ENCODE measurements at regions of chr9 and their contacts with region 1.

Region 1: GRCh38 chr9:35696525-35697215 is 6.9 kb upstream of the TPM2 start:
- DNase-seq: peak; percentile 70
- ATAC-seq: peak; percentile 93
- H3K4me3 Mint-ChIP-seq: no peak overlapping the region
- H3K27ac Mint-ChIP-seq: peak overlapping the region; percentile 52
- H3K4me1 Mint-ChIP-seq: peaks cover 9% of the 10 kb centered on the region
- H3K27me3 Mint-ChIP-seq: no peaks in the 10 kb centered on the region

Region 2: GRCh38 chr9:35518226-35518821 is 178.3 kb before region 1 on chr9:
- CTCF ChIA-PET with region 1: no interaction called
- POLR2A ChIA-PET with region 1: no interaction called
- DNase-seq: no peak
- ATAC-seq: no peak
- H3K4me3 Mint-ChIP-seq: no peak overlapping the region
- H3K27ac Mint-ChIP-seq: no peak overlapping the region
- H3K4me1 Mint-ChIP-seq: no peaks in the 10 kb centered on the region
- H3K27me3 Mint-ChIP-seq: no peaks in the 10 kb centered on the region

Region 3: DNA sequence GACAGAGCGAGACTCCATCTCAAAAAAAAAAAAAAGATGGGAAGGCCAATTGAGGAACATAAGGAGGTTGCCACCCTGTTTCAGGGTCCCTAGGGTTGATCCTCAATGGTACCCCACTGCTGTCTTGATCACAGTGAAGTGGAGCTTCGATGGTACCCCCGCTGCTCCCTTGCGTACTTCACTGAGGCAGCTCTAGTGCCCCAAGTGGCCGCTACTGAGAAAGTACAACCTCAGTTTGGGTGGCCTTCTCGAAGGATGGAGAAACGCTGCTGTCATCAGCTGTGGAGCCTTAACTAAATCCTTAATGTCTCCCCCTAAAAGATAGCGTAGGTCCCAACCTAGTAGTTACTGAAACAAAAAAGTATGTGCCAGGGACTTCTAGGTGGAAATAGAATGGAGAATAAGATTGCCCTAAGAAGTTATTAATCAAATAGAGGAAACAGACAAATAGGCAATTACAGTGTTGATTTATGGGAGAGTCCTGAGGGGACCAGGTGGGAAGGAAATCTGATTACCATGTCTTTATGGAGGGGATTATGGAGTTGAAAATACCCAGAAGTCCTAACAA is 85.4 kb before region 1 on chr9:
- CTCF ChIA-PET with region 1: interaction called, 52 read pairs
- POLR2A ChIA-PET with region 1: no interaction called
- DNase-seq: peak; percentile 73
- ATAC-seq: peak; percentile 87
- H3K4me3 Mint-ChIP-seq: no peak overlapping the region
- H3K27ac Mint-ChIP-seq: no peak overlapping the region
- H3K4me1 Mint-ChIP-seq: peaks cover 30% of the 10 kb centered on the region
- H3K27me3 Mint-ChIP-seq: no peaks in the 10 kb centered on the region

Region 4: DNA sequence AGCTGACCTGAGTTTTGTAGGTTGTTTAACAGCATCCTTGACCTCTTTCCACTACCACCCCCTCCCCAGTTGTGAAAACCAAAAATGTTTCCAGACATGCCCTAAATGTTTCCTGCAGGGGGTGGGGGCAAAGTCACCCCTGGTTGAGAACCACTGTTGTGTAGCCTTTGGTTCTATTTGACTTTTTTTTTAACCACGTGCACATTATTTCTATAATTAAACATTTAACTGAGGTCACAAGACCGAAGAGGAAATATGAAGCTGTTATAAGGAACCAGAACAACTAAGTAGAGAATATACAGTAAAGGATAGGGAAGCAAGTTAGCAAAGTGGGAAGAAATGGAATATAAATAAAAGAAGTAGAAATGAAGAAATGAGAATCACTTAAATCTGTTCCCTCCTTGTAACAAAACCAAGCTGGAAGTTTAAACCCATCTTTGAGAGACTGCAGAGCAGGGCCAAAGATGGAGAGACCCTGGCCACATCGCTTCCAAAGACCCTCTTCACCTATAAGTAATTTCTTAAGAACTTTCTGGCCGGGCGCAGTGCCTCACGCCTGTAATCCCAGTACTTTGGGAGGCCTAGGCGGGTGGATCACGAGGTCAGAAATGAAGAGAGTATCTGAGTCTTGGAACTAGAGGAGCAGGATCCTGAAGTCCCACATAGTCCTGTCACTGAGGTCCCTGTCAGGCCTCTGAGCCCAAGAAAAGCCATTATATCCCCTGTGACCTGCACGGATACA is 60.4 kb before region 1 on chr9:
- CTCF ChIA-PET with region 1: interaction called, 10 read pairs
- POLR2A ChIA-PET with region 1: no interaction called
- DNase-seq: no peak
- ATAC-seq: no peak
- H3K4me3 Mint-ChIP-seq: no peak overlapping the region
- H3K27ac Mint-ChIP-seq: no peak overlapping the region
- H3K4me1 Mint-ChIP-seq: peaks cover 56% of the 10 kb centered on the region
- H3K27me3 Mint-ChIP-seq: no peaks in the 10 kb centered on the region

Region 5: GRCh38 chr9:35657546-35658136 is 39.0 kb before region 1 on chr9 and contains the start of gene RMRP:
- CTCF ChIA-PET with region 1: interaction called, 64 read pairs
- POLR2A ChIA-PET with region 1: interaction called, 4 read pairs
- DNase-seq: peak; percentile 94
- ATAC-seq: peak; percentile 92
- H3K4me3 Mint-ChIP-seq: peak within 1 kb of the TSS; percentile 92
- H3K27ac Mint-ChIP-seq: peak within 1 kb of the TSS; percentile 97
- H3K4me1 Mint-ChIP-seq: peaks cover 62% of the 10 kb centered on the region
- H3K27me3 Mint-ChIP-seq: peaks cover 3% of the 10 kb centered on the region
- total RNA-seq, gene RMRP: 7,126 to 12,592 TPM

Region 6: GRCh38 chr9:35675732-35676392 is 20.8 kb before region 1 on chr9:
- CTCF ChIA-PET with region 1: interaction called, 32 read pairs
- POLR2A ChIA-PET with region 1: no interaction called
- DNase-seq: peak; percentile 38
- ATAC-seq: peak; percentile 62
- H3K4me3 Mint-ChIP-seq: peak overlapping the region; percentile 62
- H3K27ac Mint-ChIP-seq: no peak overlapping the region
- H3K4me1 Mint-ChIP-seq: peaks cover 15% of the 10 kb centered on the region
- H3K27me3 Mint-ChIP-seq: peaks cover 19% of the 10 kb centered on the region

Region 7: DNA sequence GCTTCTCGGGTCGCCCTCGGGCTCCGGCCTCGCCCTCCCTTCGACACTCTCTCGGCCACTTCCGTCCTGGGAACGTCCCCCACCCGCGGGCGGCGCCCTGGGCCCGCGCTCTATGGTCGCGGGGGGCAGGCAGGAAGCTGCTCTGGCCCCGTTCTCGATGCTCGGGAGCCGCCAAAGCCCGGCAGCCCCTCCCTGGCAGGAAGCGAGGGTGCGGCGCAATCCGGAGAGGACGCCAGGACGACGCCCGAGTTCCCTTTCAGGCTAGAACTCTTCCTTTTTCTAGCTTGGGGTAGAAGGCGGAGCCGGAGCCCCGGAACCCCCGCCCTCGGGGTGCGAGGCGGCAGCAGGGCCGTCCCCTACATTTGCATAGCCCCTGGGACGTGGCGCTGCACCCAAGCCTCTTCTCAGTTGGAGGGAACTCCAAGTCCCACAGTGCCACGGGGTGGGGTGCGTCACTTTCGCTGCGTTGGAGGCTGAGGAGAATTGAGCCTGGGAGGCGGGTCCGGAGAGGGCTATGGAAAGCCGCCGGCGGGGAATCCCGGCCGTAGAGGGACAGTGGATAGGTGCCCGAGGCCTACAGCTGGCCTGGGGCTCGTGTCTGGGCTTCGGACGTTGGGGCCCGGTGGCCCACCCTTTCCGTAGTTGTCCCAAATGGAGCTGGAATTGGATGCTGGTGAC is 35.6 kb after region 1 on chr9 and contains the starts of genes CREB3 and TLN1:
- CTCF ChIA-PET with region 1: interaction called, 209 read pairs
- POLR2A ChIA-PET with region 1: interaction called, 9 read pairs
- DNase-seq: peak; percentile 99
- ATAC-seq: peak; percentile 93
- H3K4me3 Mint-ChIP-seq: no peak within 1 kb of the TSS
- H3K27ac Mint-ChIP-seq: peak within 1 kb of the TSS; percentile 89
- H3K4me1 Mint-ChIP-seq: peaks cover 23% of the 10 kb centered on the region
- H3K27me3 Mint-ChIP-seq: no peaks in the 10 kb centered on the region
- total RNA-seq, gene CREB3: 21.6 to 21.7 TPM
- total RNA-seq, gene TLN1: 448 to 450 TPM

Region 8: GRCh38 chr9:35771534-35771933 is 74.9 kb after region 1 on chr9:
- CTCF ChIA-PET with region 1: no interaction called
- POLR2A ChIA-PET with region 1: no interaction called
- DNase-seq: no peak
- ATAC-seq: no peak
- H3K4me3 Mint-ChIP-seq: no peak overlapping the region
- H3K27ac Mint-ChIP-seq: no peak overlapping the region
- H3K4me1 Mint-ChIP-seq: no peaks in the 10 kb centered on the region
- H3K27me3 Mint-ChIP-seq: no peaks in the 10 kb centered on the region

Region 9: GRCh38 chr9:35826071-35826701 is 129.5 kb after region 1 on chr9:
- CTCF ChIA-PET with region 1: interaction called, 13 read pairs
- POLR2A ChIA-PET with region 1: no interaction called
- DNase-seq: peak; percentile 58
- ATAC-seq: peak; percentile 29
- H3K4me3 Mint-ChIP-seq: no peak overlapping the region
- H3K27ac Mint-ChIP-seq: no peak overlapping the region
- H3K4me1 Mint-ChIP-seq: peaks cover 27% of the 10 kb centered on the region
- H3K27me3 Mint-ChIP-seq: peaks cover 14% of the 10 kb centered on the region

Measured in activated CD8-positive, alpha-beta T cell treated with anti-CD3 and anti-CD28 coated beads, Interleukin-2, amount 10 ng/mL, durations not matched to agents 7 days and 5 days (primary cell).